Activated CD4-positive, alpha-beta memory T cell treated with anti-CD3 and anti-CD28 coated beads for 36 hours (primary cell): ENCODE measurements at regions of chr6 and their contacts with region 1.

Region 1: DNA sequence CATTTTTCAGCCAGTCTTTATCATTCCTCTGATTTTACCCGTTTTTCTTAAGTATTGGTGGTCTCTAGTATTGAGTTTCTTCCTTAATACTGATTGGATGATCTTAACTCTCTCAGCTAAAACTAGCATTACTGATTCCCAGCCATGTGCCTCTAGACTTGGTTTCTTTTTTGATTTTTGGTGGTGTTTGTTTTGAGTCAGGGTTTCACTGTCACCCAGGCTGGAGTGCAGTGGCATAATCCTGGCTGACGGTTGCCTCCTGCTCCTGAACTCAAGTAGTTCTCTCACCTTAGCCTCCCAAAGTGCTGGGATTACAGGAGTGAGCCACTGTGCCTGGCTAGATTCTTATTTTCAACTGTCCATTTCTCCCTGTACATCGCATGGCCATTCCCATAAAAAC is 24.9 kb downstream of the DPPA5 start:
- DNase-seq: peak; percentile 30
- H3K4me3 Mint-ChIP-seq: no peak overlapping the region
- H3K27ac Mint-ChIP-seq: no peak overlapping the region
- H3K4me1 Mint-ChIP-seq: peaks cover 7% of the 10 kb centered on the region
- H3K27me3 Mint-ChIP-seq: peaks cover 8% of the 10 kb centered on the region

Region 2: DNA sequence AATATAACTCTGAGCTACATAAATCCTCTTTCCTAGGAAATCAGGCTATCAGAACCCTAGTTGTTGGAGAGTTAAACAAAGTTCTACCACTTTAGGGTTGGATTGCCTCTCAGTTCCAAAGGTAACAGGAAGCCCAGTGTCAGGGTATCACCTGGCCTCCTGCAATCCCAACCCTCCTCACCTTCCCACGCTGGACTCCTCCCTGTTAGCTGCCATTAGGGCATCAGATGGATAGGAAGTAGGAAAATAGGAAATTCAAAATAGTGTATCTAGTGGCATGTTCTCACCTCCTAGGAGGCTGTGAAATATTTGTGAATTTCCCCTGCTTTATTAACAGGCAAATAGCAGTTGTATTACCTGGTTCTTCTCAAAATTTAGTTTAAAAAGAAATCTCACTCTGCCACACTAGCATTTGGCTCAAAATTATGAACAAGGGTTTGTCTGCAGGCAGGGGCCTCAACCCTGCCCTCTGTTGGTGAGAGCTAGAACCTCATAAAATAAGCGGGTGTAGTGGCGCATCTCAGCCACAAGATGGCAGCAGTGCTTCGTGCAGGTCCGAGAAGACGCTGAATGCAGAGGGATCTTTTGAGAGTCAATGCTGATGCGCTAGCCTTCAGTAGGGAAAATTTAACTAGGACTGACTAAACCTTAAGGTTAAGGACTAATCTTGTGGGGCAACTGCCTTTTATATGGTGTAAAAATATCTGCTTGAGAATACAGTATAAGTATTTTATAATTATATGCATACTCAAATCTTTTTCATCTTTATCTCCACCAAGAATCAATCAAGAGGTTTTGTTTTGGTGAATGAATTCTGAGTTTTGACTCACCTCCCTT is 917.1 kb before region 1 on chr6:
- CTCF ChIA-PET with region 1: interaction called, 44 read pairs
- POLR2A ChIA-PET with region 1: no interaction called
- intact Hi-C with region 1: loop called (anchors 1 kb)
- DNase-seq: peak; percentile 85
- H3K4me3 Mint-ChIP-seq: no peak overlapping the region
- H3K27ac Mint-ChIP-seq: no peak overlapping the region
- H3K4me1 Mint-ChIP-seq: no peaks in the 10 kb centered on the region
- H3K27me3 Mint-ChIP-seq: no peaks in the 10 kb centered on the region

Region 3: GRCh38 chr6:73129653-73130443 is 199.4 kb before region 1 on chr6:
- CTCF ChIA-PET with region 1: interaction called, 8 read pairs
- POLR2A ChIA-PET with region 1: no interaction called
- intact Hi-C with region 1: loop called (anchors 1 kb)
- DNase-seq: peak; percentile 87
- H3K4me3 Mint-ChIP-seq: no peak overlapping the region
- H3K27ac Mint-ChIP-seq: no peak overlapping the region
- H3K4me1 Mint-ChIP-seq: no peaks in the 10 kb centered on the region
- H3K27me3 Mint-ChIP-seq: peaks cover 1% of the 10 kb centered on the region

Region 4: GRCh38 chr6:73242001-73242400 is 87.2 kb before region 1 on chr6:
- CTCF ChIA-PET with region 1: no interaction called
- POLR2A ChIA-PET with region 1: no interaction called
- intact Hi-C with region 1: no loop called
- DNase-seq: no peak
- H3K4me3 Mint-ChIP-seq: no peak overlapping the region
- H3K27ac Mint-ChIP-seq: no peak overlapping the region
- H3K4me1 Mint-ChIP-seq: no peaks in the 10 kb centered on the region
- H3K27me3 Mint-ChIP-seq: no peaks in the 10 kb centered on the region

Region 5: DNA sequence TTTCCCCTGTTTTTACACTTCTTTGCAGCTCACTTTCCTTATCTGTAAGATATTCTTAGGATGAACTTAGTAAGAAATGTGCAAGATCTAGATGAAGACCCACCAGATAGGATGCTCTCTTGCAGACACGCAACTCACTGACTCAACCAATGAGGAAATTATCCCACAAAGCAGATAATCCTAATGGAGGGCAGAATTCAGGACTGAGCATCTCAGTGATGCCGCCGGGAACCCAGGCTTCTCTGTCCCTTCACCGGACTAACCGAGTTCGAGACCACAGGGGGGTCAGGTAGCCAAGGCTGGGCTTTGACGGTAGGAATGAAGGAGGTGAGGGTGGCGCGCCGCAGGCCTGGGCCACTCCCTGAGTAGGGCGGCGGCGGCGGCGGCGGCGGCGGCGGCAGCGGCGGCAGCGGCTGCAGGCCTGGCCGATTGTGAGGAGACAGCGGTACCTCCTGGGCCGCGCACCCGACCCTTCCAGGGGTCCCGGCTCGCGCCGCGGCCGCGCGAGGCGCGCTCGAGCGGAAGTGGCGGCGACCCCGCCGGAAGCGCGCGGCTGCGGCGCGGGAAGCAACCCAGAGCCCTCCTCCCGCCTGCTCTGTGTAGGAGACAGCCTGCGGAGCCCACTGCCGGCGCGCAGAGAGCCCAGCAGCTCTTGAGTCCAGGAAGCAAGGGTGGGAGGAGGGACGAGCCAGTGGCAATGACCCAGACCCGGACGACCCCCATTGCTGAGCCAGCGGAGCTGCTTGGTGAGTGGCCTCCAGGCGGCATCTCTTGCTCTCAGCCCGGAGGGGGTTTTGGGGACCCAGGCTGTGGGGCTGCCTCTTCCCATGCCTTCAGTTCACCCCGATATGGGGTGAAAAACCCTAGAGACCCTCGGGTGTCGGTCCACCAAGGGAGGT is 66.3 kb before region 1 on chr6 and contains the start of gene KHDC1:
- CTCF ChIA-PET with region 1: interaction called, 5 read pairs
- POLR2A ChIA-PET with region 1: no interaction called
- intact Hi-C with region 1: loop called (anchors 5 kb)
- DNase-seq: peak; percentile 71
- H3K4me3 Mint-ChIP-seq: peak within 1 kb of the TSS; percentile 73
- H3K27ac Mint-ChIP-seq: peak within 1 kb of the TSS; percentile 34
- H3K4me1 Mint-ChIP-seq: peaks cover 25% of the 10 kb centered on the region
- H3K27me3 Mint-ChIP-seq: no peaks in the 10 kb centered on the region
- total RNA-seq, gene KHDC1: 4.0 to 4.6 TPM

Region 6: GRCh38 chr6:73309769-73310502 is 19.3 kb before region 1 on chr6:
- CTCF ChIA-PET with region 1: interaction called, 15 read pairs
- POLR2A ChIA-PET with region 1: interaction called, 3 read pairs
- intact Hi-C with region 1: no loop called
- DNase-seq: peak; percentile 77
- H3K4me3 Mint-ChIP-seq: peak overlapping the region; percentile 91
- H3K27ac Mint-ChIP-seq: peak overlapping the region; percentile 77
- H3K4me1 Mint-ChIP-seq: peaks cover 19% of the 10 kb centered on the region
- H3K27me3 Mint-ChIP-seq: peaks cover 18% of the 10 kb centered on the region